ENCODE measurements at regions of chr1 and their contacts with region 1.

Region 1: GRCh38 chr1:26059906-26060305 is 7.5 kb downstream of the TRIM63 start:
- DNase-seq: no peak
- H3K4me3 ChIP-seq: no peak overlapping the region
- H3K27ac ChIP-seq: no peak overlapping the region
- H3K4me1 ChIP-seq: no peaks in the 10 kb centered on the region
- H3K27me3 ChIP-seq: no peaks in the 10 kb centered on the region
- CTCF ChIP-seq: no peak
- EP300 ChIP-seq: no peak
- POLR2A ChIP-seq: no peak

Region 2: GRCh38 chr1:24374891-24375786 is 1684.8 kb before region 1 on chr1:
- intact Hi-C with region 1: loop called in 1 of 4 experiments (anchors 5 kb)
- DNase-seq: no peak
- H3K4me3 ChIP-seq: no peak overlapping the region
- H3K27ac ChIP-seq: no peak overlapping the region
- H3K4me1 ChIP-seq: no peaks in the 10 kb centered on the region
- H3K27me3 ChIP-seq: no peaks in the 10 kb centered on the region
- CTCF ChIP-seq: no peak
- EP300 ChIP-seq: no peak
- POLR2A ChIP-seq: no peak

Region 3: GRCh38 chr1:26009796-26010460 is 50.0 kb before region 1 on chr1:
- intact Hi-C with region 1: no loop called
- DNase-seq: no peak
- H3K4me3 ChIP-seq: no peak overlapping the region
- H3K27ac ChIP-seq: no peak overlapping the region
- H3K4me1 ChIP-seq: no peaks in the 10 kb centered on the region
- H3K27me3 ChIP-seq: no peaks in the 10 kb centered on the region
- CTCF ChIP-seq: no peak
- EP300 ChIP-seq: no peak
- POLR2A ChIP-seq: no peak

Measured in ovary (tissue), 10 donors.